ENCODE measurements at regions of chrX and their contacts with region 1.

Region 1: DNA sequence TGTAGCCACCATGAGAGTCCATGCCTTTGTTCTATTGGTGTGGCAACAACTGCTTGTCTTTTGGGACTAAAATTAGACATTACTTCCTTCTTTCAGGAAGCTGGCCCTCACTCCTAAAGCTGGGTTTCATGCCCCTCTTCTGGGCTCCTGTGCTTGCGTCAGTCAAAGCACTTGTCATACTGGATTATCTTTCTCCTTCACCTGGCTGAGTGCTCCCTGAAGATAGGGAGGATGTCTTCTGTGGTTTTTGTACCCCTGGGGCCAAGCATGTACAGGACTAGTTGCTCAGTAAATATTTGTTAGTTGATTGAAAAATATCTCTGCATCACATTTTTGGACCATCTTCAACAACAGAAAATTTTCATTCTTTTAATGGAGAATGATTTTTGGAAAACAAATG is 26.1 kb upstream of the LONRF3 start:
- DNase-seq: no peak

Region 2: DNA sequence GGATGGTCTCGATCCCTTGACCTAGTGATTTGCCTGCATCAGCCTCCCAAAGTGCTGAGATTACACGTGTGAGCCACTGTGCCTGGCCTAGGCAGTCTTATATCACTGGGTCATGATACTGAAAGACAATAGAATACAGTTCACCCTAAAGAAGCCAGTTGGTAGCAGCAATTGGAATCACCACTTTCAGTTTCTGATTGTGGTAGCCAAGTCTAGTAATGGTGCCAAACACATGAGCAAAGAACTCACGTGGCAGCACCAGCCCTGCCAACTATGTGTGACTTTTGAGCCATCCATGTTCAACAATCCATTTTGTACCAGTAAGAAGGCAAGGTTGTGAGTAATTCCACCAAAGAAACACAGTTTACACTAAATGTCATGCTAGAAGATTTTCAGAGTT is 1380.0 kb before region 1 on chrX:
- intact Hi-C with region 1: no loop called
- DNase-seq: no peak

Region 3: GRCh38 chrX:119729408-119730201 is 781.3 kb after region 1 on chrX:
- intact Hi-C with region 1: loop called in 1 of 2 experiments (anchors 10 kb)
- DNase-seq: no peak

Measured in posterior vena cava (tissue), 2 donors.